Caco-2 (cell line): ENCODE measurements at regions of chr20 and their contacts with region 1.

Region 1: GRCh38 chr20:63980806-63981728 is at the start of gene PRPF6:
- DNase-seq: peak; percentile 99 to 100
- H3K4me3 ChIP-seq: peak within 1 kb of the TSS; percentile 58
- H3K4me3 Mint-ChIP-seq: peak within 1 kb of the TSS; percentile 90
- H3K27ac Mint-ChIP-seq: peak within 1 kb of the TSS; percentile 65
- H3K4me1 ChIP-seq: peaks cover 31% of the 10 kb centered on the region
- H3K4me1 Mint-ChIP-seq: peaks cover 30% of the 10 kb centered on the region
- H3K27me3 ChIP-seq: no peaks in the 10 kb centered on the region
- H3K27me3 Mint-ChIP-seq: no peaks in the 10 kb centered on the region
- CTCF ChIP-seq: peak; percentile 99 to 100
- total RNA-seq, gene PRPF6: 176 and 181 TPM in 2 replicates

Region 2: DNA sequence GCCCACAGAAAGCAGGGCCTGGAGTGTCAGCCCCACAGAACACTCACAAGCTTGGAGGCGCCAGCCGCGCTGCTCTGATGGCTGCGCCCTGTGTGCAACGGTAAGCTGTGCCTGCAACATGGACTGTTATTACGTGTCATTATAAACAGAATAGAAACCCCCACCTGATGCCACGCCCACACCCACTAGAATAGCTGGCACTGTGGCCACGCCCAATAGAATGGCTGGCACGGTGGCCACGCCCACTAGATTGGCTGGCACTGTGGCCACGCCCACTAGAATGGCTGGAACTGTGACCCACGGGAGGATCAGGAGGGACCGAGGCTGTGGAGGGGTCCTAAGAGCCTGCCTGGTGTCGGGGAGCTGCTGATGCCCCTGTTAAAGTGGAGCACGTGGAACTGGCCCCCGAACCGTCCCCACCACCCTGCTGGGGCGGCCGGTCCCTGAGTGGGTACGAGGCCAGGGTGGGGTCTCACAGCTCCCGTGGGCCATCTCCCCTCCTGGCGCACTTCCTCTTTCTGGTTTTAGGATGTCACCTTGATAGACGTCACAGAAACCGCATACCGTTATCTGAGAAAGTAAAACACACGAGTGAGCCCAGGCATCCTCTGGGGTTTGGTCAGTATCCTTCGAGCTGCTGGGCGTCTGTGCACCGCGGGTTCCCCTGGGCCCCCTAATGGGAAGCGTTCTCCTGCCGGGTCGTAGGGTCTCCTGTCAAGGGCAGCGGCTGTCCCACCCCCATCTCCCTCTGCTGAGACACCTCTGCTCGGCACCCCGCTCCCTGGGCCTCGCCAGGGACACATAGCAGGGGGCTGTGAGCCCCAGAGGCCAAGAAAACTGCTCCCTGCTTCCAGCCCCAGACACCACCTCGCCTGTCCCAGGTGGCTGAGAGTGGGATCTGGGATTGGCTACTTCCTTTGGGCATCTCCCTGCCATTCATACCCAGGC is 1003.2 kb before region 1 on chr20:
- CTCF ChIA-PET with region 1: no interaction called
- POLR2A ChIA-PET with region 1: no interaction called
- intact Hi-C with region 1: no loop called
- DNase-seq: no peak
- H3K4me3 ChIP-seq: no peak overlapping the region
- H3K4me3 Mint-ChIP-seq: no peak overlapping the region
- H3K27ac Mint-ChIP-seq: no peak overlapping the region
- H3K4me1 ChIP-seq: peaks cover 2% of the 10 kb centered on the region
- H3K4me1 Mint-ChIP-seq: no peaks in the 10 kb centered on the region
- H3K27me3 ChIP-seq: no peaks in the 10 kb centered on the region
- H3K27me3 Mint-ChIP-seq: peaks cover 4% of the 10 kb centered on the region
- CTCF ChIP-seq: no peak

Region 3: GRCh38 chr20:63894358-63895201 is 86.5 kb before region 1 on chr20 and contains the start of gene DNAJC5:
- CTCF ChIA-PET with region 1: interaction called, 11 read pairs
- POLR2A ChIA-PET with region 1: interaction called, 3 read pairs
- intact Hi-C with region 1: no loop called
- DNase-seq: peak; percentile 99 to 100
- H3K4me3 ChIP-seq: peak within 1 kb of the TSS; percentile 61
- H3K4me3 Mint-ChIP-seq: peak within 1 kb of the TSS; percentile 76
- H3K27ac Mint-ChIP-seq: peak within 1 kb of the TSS; percentile 85
- H3K4me1 ChIP-seq: peaks cover 27% of the 10 kb centered on the region
- H3K4me1 Mint-ChIP-seq: peaks cover 27% of the 10 kb centered on the region
- H3K27me3 ChIP-seq: no peaks in the 10 kb centered on the region
- H3K27me3 Mint-ChIP-seq: no peaks in the 10 kb centered on the region
- CTCF ChIP-seq: no peak
- total RNA-seq, gene DNAJC5: 117 and 124 TPM in 2 replicates

Region 4: DNA sequence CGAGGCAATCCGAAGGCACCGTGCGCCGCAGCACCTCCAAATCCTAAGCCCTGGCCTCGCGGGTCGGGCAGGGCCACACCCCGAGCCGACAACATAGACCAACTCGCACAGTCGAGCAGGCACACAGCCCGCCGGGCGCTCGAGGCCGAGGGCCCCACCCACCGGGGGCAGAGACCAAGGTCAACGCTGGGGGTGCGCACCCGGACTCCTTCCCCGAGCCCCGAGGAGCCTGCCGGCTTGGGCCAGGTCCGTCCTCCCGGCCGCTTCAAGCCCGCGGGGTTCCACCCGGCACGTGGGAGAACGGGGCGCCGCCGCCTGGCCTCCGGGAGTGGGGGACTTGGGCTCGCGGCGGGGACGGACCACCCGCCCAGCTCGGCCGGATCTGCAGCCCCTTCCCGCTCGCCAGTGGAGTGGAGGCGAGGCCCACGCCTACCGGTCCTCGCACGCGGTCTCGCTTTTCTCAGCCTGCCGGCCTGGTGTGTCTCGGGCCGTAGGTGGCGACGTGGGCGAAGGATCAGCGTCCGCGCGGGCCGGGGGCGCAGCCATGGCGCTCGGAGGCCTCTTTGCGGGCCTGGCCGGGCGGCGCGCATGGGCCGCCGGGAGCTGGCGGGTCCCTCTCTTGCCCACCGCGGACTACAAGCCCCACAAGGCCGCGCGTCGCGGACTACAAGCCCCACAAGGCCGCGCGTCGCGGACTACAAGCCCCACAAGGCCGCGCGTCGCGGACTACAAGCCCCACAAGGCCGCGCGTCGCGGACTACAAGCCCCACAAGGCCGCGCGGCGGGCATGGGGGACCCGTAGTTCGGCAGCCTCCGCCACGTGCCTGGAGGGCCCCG is 25.0 kb before region 1 on chr20 and contains the start of gene UCKL1:
- CTCF ChIA-PET with region 1: interaction called, 38 read pairs
- POLR2A ChIA-PET with region 1: interaction called, 17 read pairs
- intact Hi-C with region 1: no loop called
- DNase-seq: peak; percentile 97 to 99
- H3K4me3 ChIP-seq: peak within 1 kb of the TSS; percentile 99
- H3K4me3 Mint-ChIP-seq: peak within 1 kb of the TSS; percentile 89
- H3K27ac Mint-ChIP-seq: peak within 1 kb of the TSS; percentile 94
- H3K4me1 ChIP-seq: peaks cover 22% of the 10 kb centered on the region
- H3K4me1 Mint-ChIP-seq: peaks cover 43% of the 10 kb centered on the region
- H3K27me3 ChIP-seq: no peaks in the 10 kb centered on the region
- H3K27me3 Mint-ChIP-seq: no peaks in the 10 kb centered on the region
- CTCF ChIP-seq: peak in 1 of 2 experiments; percentile 34
- total RNA-seq, gene UCKL1: 101 and 113 TPM in 2 replicates

Region 5: DNA sequence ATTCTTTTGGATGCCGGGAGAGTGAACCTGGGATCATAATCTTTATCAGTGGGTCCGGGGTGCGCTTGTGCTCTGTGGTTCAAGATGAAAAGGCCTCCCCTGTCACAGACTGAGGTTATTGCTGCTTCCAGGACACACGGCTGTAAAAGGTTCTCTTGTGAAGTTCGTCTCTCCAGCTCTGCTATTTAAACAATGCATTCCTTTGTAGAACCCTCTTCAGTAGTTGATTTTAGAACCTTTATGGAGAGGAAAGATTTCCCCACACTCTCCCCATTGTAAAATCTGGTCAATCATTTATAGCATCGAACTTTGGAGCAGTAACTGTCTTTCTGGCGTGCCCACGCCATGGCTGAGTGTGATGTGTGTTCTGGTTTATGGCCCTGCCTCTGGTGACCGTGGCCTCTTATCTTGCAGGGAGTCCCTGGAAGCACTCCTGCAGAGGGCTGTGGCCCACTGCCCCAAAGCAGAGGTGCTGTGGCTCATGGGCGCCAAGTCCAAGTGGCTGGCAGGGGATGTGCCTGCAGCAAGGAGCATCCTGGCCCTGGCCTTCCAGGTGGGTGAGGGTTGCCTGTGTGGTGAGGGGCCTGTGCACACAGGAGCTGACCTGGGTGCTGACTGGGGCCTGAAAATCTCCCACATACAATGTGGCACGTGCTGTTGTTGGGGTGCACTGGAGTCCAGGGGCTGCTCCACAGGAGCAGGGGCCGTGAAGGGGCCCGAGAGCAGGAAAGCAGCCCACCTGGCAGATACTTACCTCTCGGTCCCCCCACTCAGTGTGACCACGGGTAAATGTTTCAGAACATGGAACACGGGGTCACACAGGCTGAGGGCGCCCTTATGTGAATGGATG is 43.3 kb after region 1 on chr20:
- CTCF ChIA-PET with region 1: interaction called, 11 read pairs
- POLR2A ChIA-PET with region 1: interaction called, 7 read pairs
- intact Hi-C with region 1: loop called (anchors 1 kb)
- DNase-seq: peak; percentile 92 to 95
- H3K4me3 ChIP-seq: no peak overlapping the region
- H3K4me3 Mint-ChIP-seq: peak overlapping the region; percentile 55
- H3K27ac Mint-ChIP-seq: peak overlapping the region; percentile 83
- H3K4me1 ChIP-seq: peaks cover 34% of the 10 kb centered on the region
- H3K4me1 Mint-ChIP-seq: peaks cover 37% of the 10 kb centered on the region
- H3K27me3 ChIP-seq: no peaks in the 10 kb centered on the region
- H3K27me3 Mint-ChIP-seq: no peaks in the 10 kb centered on the region
- CTCF ChIP-seq: peak in 1 of 2 experiments; percentile 19

Region 6: GRCh38 chr20:64119681-64120341 is 138.7 kb after region 1 on chr20:
- CTCF ChIA-PET with region 1: interaction called, 6 read pairs
- POLR2A ChIA-PET with region 1: interaction called, 4 read pairs
- intact Hi-C with region 1: loop called (anchors 1 kb)
- DNase-seq: peak in 1 of 2 experiments; percentile 55
- H3K4me3 ChIP-seq: no peak overlapping the region
- H3K4me3 Mint-ChIP-seq: no peak overlapping the region
- H3K27ac Mint-ChIP-seq: peak overlapping the region; percentile 44
- H3K4me1 ChIP-seq: no peaks in the 10 kb centered on the region
- H3K4me1 Mint-ChIP-seq: no peaks in the 10 kb centered on the region
- H3K27me3 ChIP-seq: no peaks in the 10 kb centered on the region
- H3K27me3 Mint-ChIP-seq: peaks cover 14% of the 10 kb centered on the region
- CTCF ChIP-seq: no peak